ENCODE measurements at regions of chr12 and their contacts with region 1.

Region 1: GRCh38 chr12:116172224-116172849 is 105.2 kb downstream of the MED13L start:
- DNase-seq: peak; percentile 73
- ATAC-seq: peak; percentile 99
- H3K4me3 Mint-ChIP-seq: peak overlapping the region; percentile 73
- H3K27ac Mint-ChIP-seq: peak overlapping the region; percentile 97
- H3K4me1 Mint-ChIP-seq: peaks cover 72% of the 10 kb centered on the region
- H3K27me3 Mint-ChIP-seq: no peaks in the 10 kb centered on the region

Region 2: GRCh38 chr12:115583591-115583990 is 588.7 kb before region 1 on chr12:
- CTCF ChIA-PET with region 1: no interaction called
- POLR2A ChIA-PET with region 1: no interaction called
- intact Hi-C with region 1: no loop called
- DNase-seq: no peak
- ATAC-seq: no peak
- H3K4me3 Mint-ChIP-seq: no peak overlapping the region
- H3K27ac Mint-ChIP-seq: no peak overlapping the region
- H3K4me1 Mint-ChIP-seq: no peaks in the 10 kb centered on the region
- H3K27me3 Mint-ChIP-seq: no peaks in the 10 kb centered on the region

Region 3: GRCh38 chr12:116087962-116088361 is 84.4 kb before region 1 on chr12:
- CTCF ChIA-PET with region 1: no interaction called
- POLR2A ChIA-PET with region 1: no interaction called
- intact Hi-C with region 1: loop called in 1 of 2 experiments (anchors 5 kb)
- DNase-seq: peak; percentile 13
- ATAC-seq: peak; percentile 71
- H3K4me3 Mint-ChIP-seq: peak overlapping the region; percentile 16
- H3K27ac Mint-ChIP-seq: peak overlapping the region; percentile 78
- H3K4me1 Mint-ChIP-seq: peaks cover 57% of the 10 kb centered on the region
- H3K27me3 Mint-ChIP-seq: no peaks in the 10 kb centered on the region

Region 4: DNA sequence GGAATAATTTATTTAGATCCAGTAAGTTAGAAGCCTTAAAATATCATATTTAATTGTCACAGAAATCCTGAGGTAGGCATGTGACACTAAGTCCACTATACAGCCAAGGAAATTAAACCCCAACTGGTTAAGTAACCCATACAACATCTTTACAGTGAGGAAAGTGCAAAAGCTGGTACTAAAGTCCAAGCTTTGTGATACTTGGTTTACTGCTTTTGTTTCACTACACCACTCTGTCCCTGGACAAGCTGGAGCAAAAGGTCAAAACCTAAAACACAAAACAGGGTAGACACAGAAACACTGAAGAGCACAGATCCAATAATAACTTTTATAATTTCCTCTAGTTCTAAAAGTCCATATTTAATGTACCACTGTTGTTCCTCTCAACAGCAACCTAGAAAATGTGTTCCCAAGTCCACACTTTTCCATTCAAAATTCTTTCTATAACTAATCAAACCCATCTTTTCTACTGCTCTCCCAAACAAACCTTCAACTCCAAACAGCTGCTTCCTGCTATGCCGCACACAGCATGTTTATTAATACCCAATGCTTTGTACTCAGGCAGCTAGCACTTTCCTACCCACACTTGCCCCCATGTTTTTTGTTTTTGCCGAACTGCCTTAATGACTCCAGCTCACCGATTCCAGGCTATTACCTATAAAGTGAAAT is 14.3 kb after region 1 on chr12:
- CTCF ChIA-PET with region 1: interaction called, 5 read pairs
- POLR2A ChIA-PET with region 1: no interaction called
- intact Hi-C with region 1: loop called in 1 of 2 experiments (anchors 2 kb)
- DNase-seq: no peak
- ATAC-seq: no peak
- H3K4me3 Mint-ChIP-seq: no peak overlapping the region
- H3K27ac Mint-ChIP-seq: peak overlapping the region; percentile 53
- H3K4me1 Mint-ChIP-seq: peaks cover 86% of the 10 kb centered on the region
- H3K27me3 Mint-ChIP-seq: no peaks in the 10 kb centered on the region